OCI-LY7 (cell line): ENCODE measurements at regions of chr2 and their contacts with region 1.

Region 1: DNA sequence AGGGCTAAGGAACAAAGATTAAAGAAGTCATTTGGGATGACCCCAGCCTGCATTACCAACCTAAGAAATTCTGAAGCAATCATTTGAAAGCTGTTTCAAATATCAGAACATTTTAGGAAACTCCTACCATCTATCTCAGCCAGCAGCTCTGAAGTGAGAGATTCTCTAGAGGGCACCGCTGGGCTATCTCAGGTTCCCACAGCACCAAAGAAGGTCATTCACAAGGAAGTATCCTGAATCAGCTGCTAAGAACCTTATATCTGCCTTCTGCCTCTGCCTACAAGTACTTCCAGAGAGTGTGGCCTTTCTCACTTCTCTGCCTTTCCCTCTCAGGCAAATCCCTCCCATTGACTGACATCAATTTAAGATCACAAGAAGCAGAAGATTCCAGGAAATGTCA is 13.4 kb upstream of the EVA1A start:
- DNase-seq: no peak
- H3K4me3 ChIP-seq: no peak overlapping the region
- H3K27ac ChIP-seq: no peak overlapping the region
- H3K4me1 ChIP-seq: no peaks in the 10 kb centered on the region
- CTCF ChIP-seq: no peak

Region 2: DNA sequence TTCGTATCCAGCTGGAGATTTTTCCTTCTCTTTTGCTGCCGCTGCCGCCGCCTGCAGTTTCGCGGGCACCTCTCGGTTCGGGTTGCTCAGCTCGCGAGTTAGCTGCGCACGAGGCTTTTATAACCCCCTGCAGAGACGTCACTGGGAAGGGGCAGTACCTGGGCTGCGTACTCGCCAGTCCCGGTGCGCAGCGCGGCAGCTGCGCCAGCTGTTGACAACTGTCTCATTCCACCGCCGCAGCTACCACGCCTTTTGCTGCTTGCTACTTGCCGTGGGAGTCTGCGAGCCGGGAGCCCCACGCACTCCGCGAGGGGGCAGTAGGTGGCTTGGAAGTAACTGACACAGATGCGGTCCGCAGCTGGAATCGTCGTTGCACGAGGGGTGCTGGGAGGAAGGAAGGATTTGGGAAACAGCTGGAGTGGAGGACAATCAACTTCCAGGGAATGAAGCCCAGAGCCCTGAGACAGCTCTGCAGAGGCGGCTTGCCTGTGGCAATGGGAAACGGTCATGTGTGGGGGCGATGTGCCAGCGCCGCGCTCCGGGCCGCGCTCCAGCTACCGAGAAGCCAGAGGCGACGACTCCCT is 374.6 kb before region 1 on chr2 and contains the start of gene TACR1:
- CTCF ChIA-PET with region 1: no interaction called
- POLR2A ChIA-PET with region 1: no interaction called
- intact Hi-C with region 1: no loop called
- DNase-seq: no peak
- H3K4me3 ChIP-seq: no peak within 1 kb of the TSS
- H3K27ac ChIP-seq: no peak within 1 kb of the TSS
- H3K4me1 ChIP-seq: no peaks in the 10 kb centered on the region
- CTCF ChIP-seq: 0 out of 2 replicates have a peak, but pooled peaks have one; percentile 20
- total RNA-seq, gene TACR1: not detected in 2 replicates

Region 3: DNA sequence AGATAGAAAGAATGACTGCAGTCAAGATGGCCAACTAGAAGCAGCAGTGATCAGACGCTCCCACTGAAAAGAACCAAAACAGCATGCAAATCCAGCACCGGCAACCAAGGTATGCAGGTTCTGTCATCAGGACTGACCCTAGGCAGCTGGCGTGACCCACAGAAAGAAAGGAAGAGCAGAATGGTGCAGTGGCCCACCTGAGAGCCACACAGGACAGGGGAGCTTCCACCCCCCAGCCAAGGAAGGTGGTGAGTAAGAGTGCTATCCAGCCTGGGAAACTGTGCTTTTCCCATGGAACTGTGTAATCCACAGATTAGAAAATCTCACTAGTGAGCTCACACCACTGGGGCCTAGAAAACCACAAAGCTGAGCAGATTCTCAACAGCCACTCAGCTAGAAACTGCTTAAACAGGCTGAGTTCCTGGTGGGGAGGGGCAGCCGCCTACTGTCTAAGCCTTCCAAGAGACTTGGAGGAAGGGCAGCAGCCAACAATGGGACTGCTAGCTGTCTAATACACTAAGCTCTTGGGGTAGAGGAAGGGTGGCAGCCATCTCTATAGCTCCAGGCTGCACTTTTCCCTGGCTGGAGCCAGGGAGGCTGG is 141.3 kb before region 1 on chr2:
- CTCF ChIA-PET with region 1: no interaction called
- POLR2A ChIA-PET with region 1: no interaction called
- intact Hi-C with region 1: no loop called
- DNase-seq: peak; percentile 44
- H3K4me3 ChIP-seq: no peak overlapping the region
- H3K27ac ChIP-seq: no peak overlapping the region
- H3K4me1 ChIP-seq: peaks cover 57% of the 10 kb centered on the region
- CTCF ChIP-seq: no peak

Region 4: GRCh38 chr2:75589411-75590031 is 15.4 kb after region 1 on chr2:
- CTCF ChIA-PET with region 1: no interaction called
- POLR2A ChIA-PET with region 1: interaction called, 10 read pairs
- intact Hi-C with region 1: no loop called
- DNase-seq: no peak
- H3K4me3 ChIP-seq: no peak overlapping the region
- H3K27ac ChIP-seq: no peak overlapping the region
- H3K4me1 ChIP-seq: no peaks in the 10 kb centered on the region
- CTCF ChIP-seq: no peak

Region 5: GRCh38 chr2:75698918-75699317 is 124.8 kb after region 1 on chr2:
- CTCF ChIA-PET with region 1: no interaction called
- POLR2A ChIA-PET with region 1: no interaction called
- intact Hi-C with region 1: no loop called
- DNase-seq: no peak
- H3K4me3 ChIP-seq: no peak overlapping the region
- H3K27ac ChIP-seq: no peak overlapping the region
- H3K4me1 ChIP-seq: no peaks in the 10 kb centered on the region
- CTCF ChIP-seq: no peak